Activated CD8-positive, alpha-beta T cell treated with anti-CD3 and anti-CD28 coated beads for 36 hours (primary cell): ENCODE measurements at regions of chr3 and their contacts with region 1.

Region 1: GRCh38 chr3:81338676-81339555 is 422.5 kb downstream of the GBE1 start:
- DNase-seq: no peak
- ATAC-seq: peak; percentile 51
- H3K4me3 Mint-ChIP-seq: no peak overlapping the region
- H3K27ac Mint-ChIP-seq: no peak overlapping the region
- H3K4me1 Mint-ChIP-seq: no peaks in the 10 kb centered on the region
- H3K27me3 Mint-ChIP-seq: no peaks in the 10 kb centered on the region
- CTCF ChIP-seq: peak; percentile 22

Region 2: DNA sequence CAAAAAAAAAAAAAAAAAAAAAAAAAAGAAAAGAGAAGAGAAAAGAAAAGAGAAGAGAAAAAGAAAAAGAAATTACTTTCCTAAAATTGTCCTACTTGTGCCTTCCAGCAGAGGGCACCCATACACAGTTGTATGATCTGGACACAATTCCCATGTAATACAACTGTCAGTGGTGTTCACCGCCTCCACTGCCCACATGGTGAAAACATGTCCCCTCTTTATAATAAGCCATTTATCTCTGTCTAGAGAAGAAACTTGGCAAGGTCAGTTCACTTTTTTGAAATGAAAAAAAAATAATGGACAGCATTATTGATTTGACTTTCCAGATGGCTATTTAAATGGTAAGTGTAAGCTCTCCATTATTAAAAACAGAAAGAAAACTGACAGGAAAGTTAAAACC is 36.9 kb before region 1 on chr3:
- CTCF ChIA-PET with region 1: interaction called, 13 read pairs
- POLR2A ChIA-PET with region 1: no interaction called
- intact Hi-C with region 1: no loop called
- DNase-seq: peak; percentile 30
- ATAC-seq: no peak
- H3K4me3 Mint-ChIP-seq: no peak overlapping the region
- H3K27ac Mint-ChIP-seq: no peak overlapping the region
- H3K4me1 Mint-ChIP-seq: no peaks in the 10 kb centered on the region
- H3K27me3 Mint-ChIP-seq: no peaks in the 10 kb centered on the region
- CTCF ChIP-seq: peak; percentile 60